ENCODE measurements at regions of chr9 and their contacts with region 1.

Region 1: GRCh38 chr9:124415102-124415851 is at the start of gene PSMB7:
- DNase-seq: peak; percentile 98
- H3K4me3 ChIP-seq: peak within 1 kb of the TSS; percentile 74
- H3K27ac ChIP-seq: peak within 1 kb of the TSS; percentile 80
- H3K4me1 ChIP-seq: peaks cover 20% of the 10 kb centered on the region
- H3K27me3 ChIP-seq: no peaks in the 10 kb centered on the region
- CTCF ChIP-seq: peak; percentile 85
- total RNA-seq, gene PSMB7: 355 and 380 TPM in 2 replicates

Region 2: DNA sequence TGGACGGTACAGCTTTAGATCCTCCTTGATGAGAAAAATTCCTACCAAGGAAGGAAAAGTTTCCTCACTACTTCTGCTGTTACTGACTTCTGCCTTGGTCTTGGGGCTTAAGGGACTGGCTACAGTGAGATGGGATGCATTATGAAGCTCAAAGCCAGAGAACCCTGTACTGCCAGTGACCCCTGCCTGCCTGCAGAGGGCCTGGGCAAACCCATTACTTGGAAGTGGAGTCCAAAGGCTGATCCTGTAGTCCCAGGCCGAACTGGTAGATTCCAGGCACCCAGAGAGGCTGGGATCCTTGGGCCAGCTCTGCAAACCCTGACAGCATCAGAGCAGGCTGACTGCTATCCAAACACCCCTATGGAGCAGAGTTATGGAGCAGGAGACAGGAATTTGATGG is 117.6 kb after region 1 on chr9:
- CTCF ChIA-PET with region 1: interaction called, 13 read pairs
- POLR2A ChIA-PET with region 1: no interaction called
- intact Hi-C with region 1: loop called (anchors 1 kb)
- DNase-seq: no peak
- H3K4me3 ChIP-seq: no peak overlapping the region
- H3K27ac ChIP-seq: no peak overlapping the region
- H3K4me1 ChIP-seq: no peaks in the 10 kb centered on the region
- H3K27me3 ChIP-seq: no peaks in the 10 kb centered on the region
- CTCF ChIP-seq: no peak

Region 3: DNA sequence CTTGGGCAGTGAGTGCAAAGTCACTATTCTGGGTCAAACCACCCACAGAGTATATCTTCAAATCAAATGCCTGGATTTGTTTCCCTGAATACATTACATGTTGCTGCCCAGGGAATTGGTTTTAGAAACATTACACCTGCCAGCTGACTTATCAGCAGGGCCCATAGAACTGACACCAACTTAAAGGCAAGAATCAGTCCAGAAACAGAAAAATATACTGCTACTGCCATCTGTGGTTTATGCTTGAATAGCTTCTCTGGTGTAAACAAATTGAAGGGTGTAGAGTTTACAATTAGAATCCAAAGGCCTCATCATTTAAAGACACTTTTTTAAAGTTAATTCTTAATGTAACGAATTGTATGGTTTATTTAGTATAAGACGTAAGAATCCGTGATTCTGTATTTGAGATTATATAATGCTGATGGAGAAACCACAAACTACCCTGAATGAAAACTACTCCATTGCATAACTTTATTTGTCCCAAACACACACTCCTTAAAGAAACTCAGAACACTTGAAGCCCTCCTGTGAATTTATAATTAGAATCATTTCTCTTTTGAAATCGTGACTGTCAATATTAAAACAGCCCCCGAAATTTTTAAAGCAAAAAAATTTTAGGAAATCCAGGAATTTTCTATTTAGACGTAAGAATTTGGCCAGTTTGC is 349.6 kb after region 1 on chr9:
- CTCF ChIA-PET with region 1: no interaction called
- POLR2A ChIA-PET with region 1: no interaction called
- intact Hi-C with region 1: loop called (anchors 10 kb)
- DNase-seq: peak; percentile 59
- H3K4me3 ChIP-seq: no peak overlapping the region
- H3K27ac ChIP-seq: no peak overlapping the region
- H3K4me1 ChIP-seq: peaks cover 58% of the 10 kb centered on the region
- H3K27me3 ChIP-seq: no peaks in the 10 kb centered on the region
- CTCF ChIP-seq: peak; percentile 65

Measured in A673 (cell line).